ENCODE measurements at regions of chr15 and their contacts with region 1.

Region 1: DNA sequence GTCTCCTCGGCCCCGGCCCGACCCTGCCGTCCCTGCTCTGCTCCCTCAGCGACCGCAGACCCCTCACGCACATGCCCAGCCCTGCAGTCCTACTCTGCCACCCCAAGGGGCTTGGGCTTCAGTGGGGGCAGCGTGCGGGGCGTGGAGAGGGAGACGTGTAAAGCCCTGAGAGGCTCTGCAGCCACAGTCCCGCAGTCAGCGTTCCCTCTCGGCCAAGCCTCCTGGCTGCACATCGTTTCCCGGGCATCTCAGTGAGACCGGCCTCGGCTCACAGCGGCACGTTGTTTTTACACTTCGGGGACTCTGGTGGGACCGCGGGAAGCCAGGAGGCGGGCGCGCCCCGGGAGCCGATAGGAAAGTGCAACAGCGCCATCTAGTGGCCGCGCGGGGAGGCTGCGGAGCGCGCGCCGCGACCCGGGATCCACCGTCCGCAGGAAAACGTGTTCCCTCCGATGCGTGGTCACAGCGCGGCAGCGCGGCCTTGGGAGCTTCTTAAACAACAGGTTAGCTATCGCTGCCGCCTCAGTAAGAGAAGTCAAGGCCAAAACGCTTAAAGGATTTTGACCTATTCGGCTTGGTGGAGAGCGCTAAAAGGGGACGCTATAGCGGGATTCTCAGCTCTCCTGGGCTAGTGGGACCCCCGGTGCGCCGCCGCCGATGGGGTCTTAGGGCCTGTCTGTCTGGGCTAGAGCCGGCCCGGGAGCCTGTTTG is 226.8 kb upstream of the IGF1R start:
- DNase-seq: peak; percentile 79
- H3K27ac ChIP-seq: no peak overlapping the region
- CTCF ChIP-seq: peak; percentile 99

Region 2: DNA sequence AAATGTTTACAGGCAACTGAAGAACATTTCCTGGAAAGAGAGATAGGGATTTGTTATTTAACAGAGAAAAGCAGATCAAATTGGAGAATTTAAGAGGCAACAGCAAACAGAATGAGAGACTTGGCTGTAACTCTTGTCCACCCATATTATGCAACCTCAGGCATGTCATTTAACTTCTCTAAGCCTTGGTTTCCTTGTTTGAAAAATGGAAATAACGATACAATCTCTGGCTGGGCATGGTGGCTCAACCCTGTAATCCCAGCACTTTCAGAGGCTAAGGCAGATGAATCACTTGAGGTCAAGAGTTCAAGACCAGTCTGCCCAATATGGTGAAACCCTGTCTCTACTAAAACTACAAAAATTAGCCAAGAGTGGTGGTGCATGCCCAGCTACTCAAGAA is 437.4 kb before region 1 on chr15:
- CTCF ChIA-PET with region 1: no interaction called
- POLR2A ChIA-PET with region 1: no interaction called
- DNase-seq: no peak
- H3K27ac ChIP-seq: no peak overlapping the region
- CTCF ChIP-seq: no peak

Region 3: DNA sequence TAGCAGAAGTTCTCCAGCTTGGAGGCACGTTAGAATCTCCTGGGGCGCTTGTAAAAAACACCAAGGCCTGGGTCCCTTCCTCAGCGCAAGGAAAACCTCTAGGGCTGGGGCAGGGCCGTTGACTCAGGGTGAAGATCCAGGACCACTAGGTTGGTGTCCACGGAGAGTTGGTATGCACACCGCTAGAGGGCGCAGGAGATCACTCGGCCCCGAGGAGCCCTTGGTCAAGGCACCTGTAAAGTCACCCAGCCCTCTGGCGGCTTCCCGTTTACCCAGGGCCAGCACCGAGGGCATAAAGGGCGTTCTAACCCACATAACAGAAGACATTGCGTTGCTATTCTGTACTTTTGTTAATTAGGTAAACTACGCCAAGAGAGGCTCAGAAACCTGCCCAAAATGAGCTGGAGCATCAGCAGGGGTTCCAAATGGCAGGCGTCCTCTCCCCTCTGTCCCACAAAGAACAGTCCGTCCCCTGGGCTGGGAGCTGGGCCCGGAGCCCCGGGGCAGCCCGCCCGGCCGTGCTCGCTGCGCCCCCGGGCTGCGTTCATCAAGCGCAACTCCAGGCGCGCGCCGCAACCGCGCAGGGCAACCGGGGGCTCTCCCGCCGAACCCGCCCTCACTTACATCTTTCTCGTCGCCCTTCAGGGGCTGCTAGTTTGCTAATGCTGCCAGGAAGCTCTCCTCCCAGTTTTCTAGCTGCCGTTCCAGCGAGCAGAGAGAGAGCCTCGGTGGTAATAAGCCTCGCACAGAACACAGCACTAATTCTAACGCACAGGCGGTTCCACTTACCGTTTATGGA is 128.9 kb before region 1 on chr15:
- CTCF ChIA-PET with region 1: interaction called, 21 read pairs
- POLR2A ChIA-PET with region 1: no interaction called
- DNase-seq: peak; percentile 69
- H3K27ac ChIP-seq: no peak overlapping the region
- CTCF ChIP-seq: peak; percentile 93

Region 4: GRCh38 chr15:98311566-98312188 is 109.9 kb before region 1 on chr15:
- CTCF ChIA-PET with region 1: interaction called, 63 read pairs
- POLR2A ChIA-PET with region 1: no interaction called
- DNase-seq: peak; percentile 65
- H3K27ac ChIP-seq: no peak overlapping the region
- CTCF ChIP-seq: peak; percentile 92

Region 5: GRCh38 chr15:98321896-98322295 is 99.7 kb before region 1 on chr15:
- CTCF ChIA-PET with region 1: interaction called, 12 read pairs
- POLR2A ChIA-PET with region 1: no interaction called
- DNase-seq: peak; percentile 84
- H3K27ac ChIP-seq: no peak overlapping the region
- CTCF ChIP-seq: no peak

Region 6: GRCh38 chr15:98442379-98442833 is 20.8 kb after region 1 on chr15:
- CTCF ChIA-PET with region 1: no interaction called
- POLR2A ChIA-PET with region 1: no interaction called
- DNase-seq: peak; percentile 85
- H3K27ac ChIP-seq: no peak overlapping the region
- CTCF ChIP-seq: peak; percentile 96